ENCODE measurements at regions of chr18 and their contacts with region 1.

Region 1: DNA sequence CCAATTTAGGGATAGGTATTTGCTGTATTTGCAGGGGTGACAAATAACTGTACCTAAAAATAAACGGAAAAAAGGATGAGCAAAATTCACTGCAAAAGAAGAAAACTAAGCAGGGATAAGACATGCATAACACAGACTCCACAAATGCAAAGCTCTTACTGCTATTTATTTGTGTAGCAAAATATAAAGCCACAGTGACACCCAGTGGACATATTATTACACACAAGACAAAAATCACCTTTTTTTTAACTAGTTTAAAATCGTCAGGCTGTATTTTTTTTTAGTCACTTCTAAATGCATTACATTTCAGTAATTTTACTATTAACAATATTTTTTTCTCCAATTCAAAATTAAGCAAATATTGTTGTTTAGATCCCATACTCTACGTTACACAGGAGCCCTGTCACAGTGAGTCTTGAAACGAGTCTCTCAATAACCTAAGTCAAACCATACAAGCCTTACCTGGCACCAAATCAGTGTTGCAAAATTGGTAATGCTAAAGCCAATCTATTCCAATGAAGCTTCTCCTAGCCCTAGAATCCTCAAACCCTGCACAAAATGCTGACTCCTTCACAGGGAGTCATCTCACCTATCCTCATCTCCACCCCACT is 23.7 kb downstream of the METTL4 start:
- DNase-seq: peak; percentile 33 to 69 (median 55)
- ATAC-seq: peak; percentile 84
- H3K4me3 ChIP-seq: no peak overlapping the region
- H3K27ac ChIP-seq: no peak overlapping the region
- H3K4me1 ChIP-seq: no peaks in the 10 kb centered on the region
- H3K27me3 ChIP-seq: no peaks in the 10 kb centered on the region
- CTCF ChIP-seq: peak; percentile 38 to 82 (median 53); a peak in 4 of 6 replicates
- EP300 ChIP-seq: no peak
- POLR2A ChIP-seq: no peak
- RAD21 ChIP-seq: peak; percentile 83 to 84

Region 2: DNA sequence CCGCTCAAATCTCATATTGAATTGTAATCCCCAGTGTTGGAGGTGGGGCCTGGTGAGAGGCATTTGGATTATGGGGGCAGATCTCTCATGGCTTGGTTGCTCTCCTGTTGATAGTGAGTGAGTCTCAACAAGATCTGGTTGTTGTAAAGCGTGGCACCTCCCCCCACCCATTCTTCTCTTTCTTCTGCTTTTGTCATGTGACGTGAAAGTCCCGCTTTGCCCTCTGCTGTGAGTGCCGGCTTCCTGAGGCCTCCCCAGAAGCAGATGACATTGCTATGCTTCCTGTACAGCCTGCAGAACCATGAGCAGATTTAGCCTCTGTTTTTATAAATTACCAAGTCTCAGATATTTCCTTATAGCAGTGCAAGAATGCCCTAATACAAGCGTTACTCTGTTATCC is 969.1 kb before region 1 on chr18:
- CTCF ChIA-PET with region 1: no interaction called
- POLR2A ChIA-PET with region 1: no interaction called
- in situ Hi-C with region 1: loop called (anchors 25 kb)
- intact Hi-C with region 1: loop called (anchors 10 kb)
- DNase-seq: no peak
- ATAC-seq: no peak
- H3K4me3 ChIP-seq: no peak overlapping the region
- H3K27ac ChIP-seq: no peak overlapping the region
- H3K4me1 ChIP-seq: no peaks in the 10 kb centered on the region
- H3K27me3 ChIP-seq: no peaks in the 10 kb centered on the region
- CTCF ChIP-seq: no peak
- EP300 ChIP-seq: no peak
- POLR2A ChIP-seq: no peak
- RAD21 ChIP-seq: no peak

Region 3: DNA sequence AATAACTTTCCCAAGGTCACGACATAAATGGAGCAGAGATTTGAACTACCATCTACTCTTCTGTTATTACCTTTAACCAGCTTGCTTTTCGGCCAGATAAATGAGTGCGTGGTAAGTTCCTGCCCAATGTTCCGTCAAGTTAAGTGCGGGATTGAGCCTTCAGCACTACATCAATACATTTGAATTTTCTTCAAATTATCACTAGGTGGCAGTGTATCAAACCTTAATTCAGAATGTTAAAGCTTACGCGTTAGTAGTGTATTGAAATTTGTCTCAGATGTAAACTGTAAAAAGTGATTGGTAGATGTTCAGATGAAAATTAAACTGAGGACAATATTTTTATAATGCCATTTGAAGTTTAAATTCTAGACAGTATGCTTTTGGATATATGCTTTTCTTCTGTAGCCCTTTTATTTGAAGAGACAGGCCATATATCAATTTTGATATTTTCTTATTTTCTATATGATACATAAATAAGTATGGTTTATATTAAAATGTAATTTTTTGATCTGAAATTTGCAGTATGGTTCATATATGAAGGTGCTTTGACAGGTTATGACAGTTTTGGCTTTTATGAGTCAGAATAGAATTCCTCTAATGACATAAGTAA is 961.6 kb before region 1 on chr18:
- CTCF ChIA-PET with region 1: interaction called, 12 read pairs
- POLR2A ChIA-PET with region 1: no interaction called
- in situ Hi-C with region 1: loop called (anchors 25 kb)
- intact Hi-C with region 1: no loop called
- DNase-seq: peak; percentile 20 to 43 (median 28)
- ATAC-seq: peak; percentile 86
- H3K4me3 ChIP-seq: no peak overlapping the region
- H3K27ac ChIP-seq: no peak overlapping the region
- H3K4me1 ChIP-seq: no peaks in the 10 kb centered on the region
- H3K27me3 ChIP-seq: no peaks in the 10 kb centered on the region
- CTCF ChIP-seq: peak; percentile 24 to 64 (median 60); a peak in 5 of 6 replicates
- EP300 ChIP-seq: no peak
- POLR2A ChIP-seq: no peak
- RAD21 ChIP-seq: peak; percentile 50 to 63

Region 4: GRCh38 chr18:1929720-1930119 is 617.9 kb before region 1 on chr18:
- CTCF ChIA-PET with region 1: no interaction called
- POLR2A ChIA-PET with region 1: no interaction called
- in situ Hi-C with region 1: no loop called
- intact Hi-C with region 1: loop called (anchors 10 kb)
- DNase-seq: no peak
- ATAC-seq: no peak
- H3K4me3 ChIP-seq: no peak overlapping the region
- H3K27ac ChIP-seq: no peak overlapping the region
- H3K4me1 ChIP-seq: no peaks in the 10 kb centered on the region
- H3K27me3 ChIP-seq: no peaks in the 10 kb centered on the region; a peak in 1 of 5 replicates
- CTCF ChIP-seq: no peak
- EP300 ChIP-seq: no peak
- POLR2A ChIP-seq: no peak
- RAD21 ChIP-seq: no peak

Region 5: DNA sequence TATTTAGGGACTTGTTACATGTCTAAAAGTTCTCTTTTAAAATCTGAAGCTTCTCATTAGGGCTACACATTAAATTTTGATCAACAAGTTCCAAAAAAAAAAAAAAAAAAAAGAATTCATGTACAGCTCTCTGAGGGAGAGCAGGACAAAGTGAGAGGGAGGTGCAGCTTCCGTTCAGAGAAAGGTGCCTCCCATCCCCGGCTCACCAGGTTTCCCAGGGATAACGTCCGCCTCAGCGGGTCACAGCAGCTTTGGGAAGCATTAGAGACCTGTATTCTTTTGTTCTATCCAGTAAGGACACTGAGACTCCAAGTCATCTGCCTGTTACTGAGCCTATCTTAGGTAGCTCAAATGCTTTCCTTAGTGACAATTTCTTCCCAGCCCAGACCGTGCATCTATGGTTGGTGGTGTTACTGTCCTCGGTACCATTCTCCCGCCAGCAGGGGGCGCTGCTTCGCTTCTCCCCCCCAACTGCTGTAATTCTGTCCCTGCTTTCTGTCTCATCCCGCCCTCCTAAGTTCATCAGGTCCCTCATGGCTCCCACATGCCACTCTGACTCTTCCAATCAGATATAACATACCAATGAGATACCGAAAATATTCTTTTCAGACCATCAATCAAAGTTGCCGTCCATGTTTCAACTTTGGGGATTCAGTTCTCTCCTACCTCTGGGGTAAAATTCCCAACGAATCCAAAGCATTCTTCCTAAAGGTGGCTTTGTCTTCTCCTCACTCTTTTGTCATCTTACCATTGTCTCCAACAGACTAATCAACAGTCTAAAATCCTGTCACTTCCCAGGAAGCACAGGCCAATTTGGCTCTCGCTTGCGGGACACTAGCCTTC is 442.7 kb before region 1 on chr18:
- CTCF ChIA-PET with region 1: no interaction called
- POLR2A ChIA-PET with region 1: no interaction called
- in situ Hi-C with region 1: no loop called
- intact Hi-C with region 1: loop called (anchors 1 kb)
- DNase-seq: peak; percentile 84 to 88 (median 86)
- ATAC-seq: peak; percentile 99
- H3K4me3 ChIP-seq: no peak overlapping the region
- H3K27ac ChIP-seq: no peak overlapping the region
- H3K4me1 ChIP-seq: no peaks in the 10 kb centered on the region
- H3K27me3 ChIP-seq: no peaks in the 10 kb centered on the region
- CTCF ChIP-seq: peak; percentile 83 to 94 (median 86)
- EP300 ChIP-seq: no peak
- POLR2A ChIP-seq: no peak
- RAD21 ChIP-seq: peak; percentile 93 to 96

Region 6: DNA sequence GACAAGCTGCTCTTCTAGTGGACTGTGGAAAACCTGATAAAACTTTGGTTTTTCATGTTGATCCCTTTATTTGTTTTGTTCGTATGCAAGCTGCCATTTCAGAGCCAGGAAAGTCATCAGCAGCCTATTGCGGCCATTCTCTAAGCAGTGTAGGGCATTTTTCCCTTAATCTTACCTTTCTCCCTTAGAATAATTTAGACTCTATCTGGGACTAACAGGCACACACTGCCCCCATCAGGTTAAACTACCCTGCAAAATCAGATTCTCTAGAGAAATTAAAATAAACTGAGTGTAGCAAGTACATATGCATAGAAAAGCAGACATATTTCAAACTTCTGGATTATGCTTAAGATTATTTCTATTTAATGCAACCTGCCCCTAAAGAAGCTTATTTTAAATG is 323.7 kb before region 1 on chr18:
- CTCF ChIA-PET with region 1: no interaction called
- POLR2A ChIA-PET with region 1: no interaction called
- in situ Hi-C with region 1: no loop called
- intact Hi-C with region 1: loop called (anchors 10 kb)
- DNase-seq: peak in 2 of 4 experiments; percentile 29 to 61
- ATAC-seq: peak; percentile 89
- H3K4me3 ChIP-seq: no peak overlapping the region
- H3K27ac ChIP-seq: no peak overlapping the region
- H3K4me1 ChIP-seq: no peaks in the 10 kb centered on the region
- H3K27me3 ChIP-seq: no peaks in the 10 kb centered on the region
- CTCF ChIP-seq: peak; percentile 51 to 76 (median 55); a peak in 5 of 6 replicates
- EP300 ChIP-seq: no peak
- POLR2A ChIP-seq: no peak
- RAD21 ChIP-seq: peak; percentile 71 to 74